Mucosa of descending colon (tissue), 3 donors: ENCODE measurements at regions of chr4 and their contacts with region 1.

Region 1: GRCh38 chr4:120156120-120156718 is 89.6 kb upstream of the MAD2L1 start:
- DNase-seq: peak in 1 of 3 donors; percentile 57
- ATAC-seq: peak; percentile 56
- H3K4me3 ChIP-seq: no peak overlapping the region
- H3K4me1 ChIP-seq: no peaks in the 10 kb centered on the region
- CTCF ChIP-seq: no peak

Region 2: GRCh38 chr4:120293341-120293740 is 137.1 kb after region 1 on chr4:
- intact Hi-C with region 1: no loop called
- DNase-seq: no peak
- ATAC-seq: no peak
- H3K4me3 ChIP-seq: no peak overlapping the region
- H3K4me1 ChIP-seq: no peaks in the 10 kb centered on the region
- CTCF ChIP-seq: no peak

Region 3: GRCh38 chr4:121009578-121010478 is 853.6 kb after region 1 on chr4:
- intact Hi-C with region 1: loop called in 1 of 2 experiments (anchors 5 kb)
- DNase-seq: no peak
- ATAC-seq: no peak
- H3K4me3 ChIP-seq: no peak overlapping the region
- H3K4me1 ChIP-seq: no peaks in the 10 kb centered on the region
- CTCF ChIP-seq: no peak

Region 4: GRCh38 chr4:121096629-121097028 is 940.4 kb after region 1 on chr4:
- intact Hi-C with region 1: loop called in 1 of 2 experiments (anchors 5 kb)
- DNase-seq: no peak
- ATAC-seq: no peak
- H3K4me3 ChIP-seq: no peak overlapping the region
- H3K4me1 ChIP-seq: no peaks in the 10 kb centered on the region
- CTCF ChIP-seq: no peak